ENCODE measurements at regions of chr6 and their contacts with region 1.

Region 1: DNA sequence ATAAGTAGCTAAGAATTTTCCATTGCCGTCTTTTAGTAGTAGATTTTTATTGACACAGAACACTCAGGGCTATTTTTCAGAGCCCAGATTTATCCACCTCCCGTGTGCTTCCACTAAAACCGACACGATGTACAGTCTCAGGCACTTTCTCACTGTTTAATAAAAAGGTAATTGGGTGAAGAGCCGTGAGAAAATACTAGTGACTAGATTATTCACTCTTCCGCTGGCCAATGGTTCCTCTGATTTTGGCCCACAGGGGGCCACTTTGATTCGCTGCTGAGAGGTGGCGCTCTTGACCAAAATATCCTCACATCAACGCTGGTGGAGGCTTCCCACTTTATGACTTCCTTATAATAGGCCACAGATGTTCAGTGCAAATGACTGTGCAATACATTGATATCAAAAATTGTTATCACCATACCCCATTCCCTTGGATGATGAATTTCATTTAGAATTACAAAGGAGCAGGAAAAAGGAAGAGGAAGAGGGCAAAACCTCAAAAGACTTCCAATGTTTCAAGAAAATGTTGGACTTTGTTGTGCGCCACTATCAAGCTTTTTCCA is 12.3 kb upstream of the HDDC2 start:
- DNase-seq: peak; percentile 77
- H3K4me3 ChIP-seq: no peak overlapping the region
- H3K27ac ChIP-seq: no peak overlapping the region
- H3K4me1 ChIP-seq: no peaks in the 10 kb centered on the region
- CTCF ChIP-seq: peak; percentile 98

Region 2: DNA sequence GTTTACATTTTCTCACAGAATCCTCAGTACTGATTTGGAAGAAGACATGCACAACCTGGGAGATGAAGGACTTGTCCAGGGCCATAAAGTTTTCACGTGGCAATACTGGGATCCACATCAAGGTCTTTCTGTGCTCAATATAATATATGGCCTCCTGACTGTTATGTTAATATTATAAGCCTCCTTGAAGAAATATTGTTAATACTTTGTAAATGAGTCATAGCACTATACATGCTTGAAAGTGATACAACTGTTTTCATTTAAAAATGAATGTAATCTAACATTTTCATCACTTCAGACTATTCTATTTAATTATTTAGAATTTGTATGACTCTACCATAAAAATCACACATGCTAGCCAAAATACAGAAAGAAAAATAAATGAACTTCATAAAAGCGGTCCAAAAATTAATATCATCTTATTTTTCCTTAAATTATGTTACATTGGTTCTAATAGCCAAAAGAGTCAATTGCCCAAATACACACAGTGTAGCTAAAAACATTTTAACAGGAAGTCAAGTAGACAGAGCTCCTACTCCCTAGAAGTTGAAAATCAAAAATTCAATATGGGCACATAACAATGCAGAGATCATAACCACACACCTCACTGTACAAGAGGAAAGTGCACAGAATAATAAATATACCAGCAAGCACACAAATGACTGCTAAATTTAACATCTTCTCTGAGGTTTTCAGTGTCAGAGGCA is 175.6 kb after region 1 on chr6:
- CTCF ChIA-PET with region 1: no interaction called
- POLR2A ChIA-PET with region 1: no interaction called
- intact Hi-C with region 1: loop called (anchors 5 kb)
- DNase-seq: no peak
- H3K4me3 ChIP-seq: no peak overlapping the region
- H3K27ac ChIP-seq: no peak overlapping the region
- H3K4me1 ChIP-seq: no peaks in the 10 kb centered on the region
- CTCF ChIP-seq: no peak

Region 3: DNA sequence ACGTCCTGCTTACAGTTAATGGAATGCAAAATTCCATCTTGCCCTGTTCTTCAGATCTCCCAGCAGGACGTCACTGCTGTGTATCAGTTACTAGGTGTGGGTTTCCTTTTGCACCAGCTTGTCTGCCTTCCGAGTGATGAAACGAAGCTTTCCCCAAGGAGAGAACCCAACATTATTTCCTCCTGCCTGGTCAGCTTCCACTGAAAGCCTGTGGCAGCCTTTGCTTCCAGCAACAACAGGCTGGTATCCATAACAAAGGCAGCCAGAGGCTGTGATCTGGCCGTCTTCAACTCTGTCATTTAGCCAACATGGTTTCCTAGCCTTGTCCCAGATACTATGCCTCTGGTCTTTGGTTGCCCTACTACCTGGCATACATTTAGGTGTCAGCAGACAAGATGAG is 356.5 kb after region 1 on chr6:
- CTCF ChIA-PET with region 1: no interaction called
- POLR2A ChIA-PET with region 1: no interaction called
- intact Hi-C with region 1: loop called (anchors 10 kb)
- DNase-seq: no peak
- H3K4me3 ChIP-seq: no peak overlapping the region
- H3K27ac ChIP-seq: no peak overlapping the region
- H3K4me1 ChIP-seq: no peaks in the 10 kb centered on the region
- CTCF ChIP-seq: no peak

Region 4: DNA sequence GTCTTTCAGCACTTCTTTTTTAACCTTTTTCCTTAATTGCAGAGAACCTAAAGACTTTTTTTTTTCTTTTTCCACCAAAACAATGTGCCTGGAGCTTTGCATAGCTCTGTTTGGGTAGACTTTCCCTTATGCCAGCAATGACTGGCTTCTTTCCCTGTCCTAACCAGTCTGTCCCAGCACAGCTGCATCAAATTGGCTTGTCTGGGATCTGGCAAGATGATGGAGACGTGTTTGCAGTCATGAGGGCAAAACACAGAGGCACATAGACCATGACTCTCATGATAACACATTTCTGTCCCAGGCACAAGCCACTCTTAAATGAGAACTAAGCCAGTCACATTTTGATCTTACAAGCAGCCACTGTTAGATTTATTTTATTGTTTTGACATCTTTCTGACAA is 451.8 kb after region 1 on chr6:
- CTCF ChIA-PET with region 1: no interaction called
- POLR2A ChIA-PET with region 1: no interaction called
- intact Hi-C with region 1: loop called (anchors 1 kb)
- DNase-seq: no peak
- H3K4me3 ChIP-seq: no peak overlapping the region
- H3K27ac ChIP-seq: no peak overlapping the region
- H3K4me1 ChIP-seq: no peaks in the 10 kb centered on the region
- CTCF ChIP-seq: no peak